Activated CD8-positive, alpha-beta T cell treated with anti-CD3 and anti-CD28 coated beads, Interleukin-2, amount 10 ng/mL, durations not matched to agents 7 days and 5 days (primary cell): ENCODE measurements at regions of chr5 and their contacts with region 1.

Region 1: DNA sequence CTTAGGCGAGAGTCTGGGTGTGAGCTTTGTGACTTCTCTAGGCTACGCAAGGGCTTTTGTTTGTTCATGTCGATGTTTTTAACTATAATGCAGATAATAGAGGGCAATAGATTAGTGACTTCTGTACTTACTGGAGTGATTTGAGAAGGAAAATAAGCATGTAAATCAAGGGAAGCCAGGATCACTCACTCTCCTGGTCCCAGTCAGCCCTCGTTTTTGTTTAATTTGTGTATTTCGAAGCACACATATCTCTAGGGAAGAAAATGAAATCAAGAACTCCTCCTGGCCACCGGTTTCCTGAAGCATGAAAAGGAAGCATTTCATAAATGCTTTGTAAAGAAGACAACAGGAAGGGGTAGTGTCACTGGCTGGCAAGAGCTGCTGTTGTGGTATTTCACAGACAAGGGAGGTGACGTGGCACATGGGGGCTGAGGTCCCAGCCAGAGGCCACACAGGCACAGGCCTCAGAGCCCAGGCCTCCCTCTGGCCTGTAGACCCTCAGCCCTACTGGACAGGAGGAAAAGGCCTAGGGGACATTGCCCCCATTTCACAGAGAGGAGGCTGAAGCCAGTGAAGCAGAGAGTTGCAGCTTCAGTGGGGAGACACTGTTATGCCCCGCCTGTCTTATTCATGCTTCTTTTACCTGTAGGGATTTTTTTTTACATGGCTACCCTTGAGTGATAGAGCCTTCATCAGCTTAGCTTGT is 34.1 kb downstream of the IRF1 start:
- DNase-seq: peak; percentile 77
- ATAC-seq: peak; percentile 69
- H3K4me3 Mint-ChIP-seq: peak overlapping the region; percentile 63
- H3K27ac Mint-ChIP-seq: peak overlapping the region; percentile 99
- H3K4me1 Mint-ChIP-seq: peaks cover 91% of the 10 kb centered on the region
- H3K27me3 Mint-ChIP-seq: no peaks in the 10 kb centered on the region

Region 2: GRCh38 chr5:132386644-132387286 is 69.7 kb before region 1 on chr5:
- CTCF ChIA-PET with region 1: interaction called, 17 read pairs
- POLR2A ChIA-PET with region 1: no interaction called
- DNase-seq: peak; percentile 87
- ATAC-seq: peak; percentile 93
- H3K4me3 Mint-ChIP-seq: no peak overlapping the region
- H3K27ac Mint-ChIP-seq: peak overlapping the region; percentile 51
- H3K4me1 Mint-ChIP-seq: peaks cover 57% of the 10 kb centered on the region
- H3K27me3 Mint-ChIP-seq: no peaks in the 10 kb centered on the region

Region 3: DNA sequence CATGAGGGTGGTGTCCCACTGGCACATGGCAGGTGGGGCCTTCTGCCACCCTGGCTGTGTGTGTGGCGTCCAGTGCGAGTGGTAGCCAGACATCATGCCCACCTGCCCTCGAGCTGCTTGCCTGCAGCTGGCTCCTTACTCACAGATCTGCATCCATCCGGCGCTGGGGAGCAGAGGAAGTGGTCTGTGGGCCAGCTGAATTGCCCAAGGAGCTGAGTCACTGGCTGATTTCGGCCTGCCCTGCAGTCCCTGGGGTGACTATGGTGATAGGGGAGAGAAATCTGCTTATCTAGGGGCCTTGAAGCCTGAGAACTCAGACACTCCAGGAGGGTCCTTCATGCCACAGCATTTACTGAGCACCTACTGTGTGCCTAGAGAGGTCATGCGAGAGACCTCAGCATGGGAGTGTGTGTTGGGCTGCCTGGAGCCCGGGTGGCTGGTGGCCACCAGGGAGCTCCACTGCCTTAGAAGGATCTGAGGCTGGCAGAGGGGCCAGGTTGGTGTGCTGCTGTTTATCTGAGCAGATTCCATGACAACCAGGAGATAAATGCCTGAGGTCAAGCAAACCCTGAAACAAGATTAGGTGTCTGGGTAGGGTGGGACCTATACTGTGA is 29.8 kb before region 1 on chr5:
- CTCF ChIA-PET with region 1: interaction called, 141 read pairs
- POLR2A ChIA-PET with region 1: interaction called, 137 read pairs
- DNase-seq: peak; percentile 85
- ATAC-seq: peak; percentile 59
- H3K4me3 Mint-ChIP-seq: peak overlapping the region; percentile 74
- H3K27ac Mint-ChIP-seq: peak overlapping the region; percentile 98
- H3K4me1 Mint-ChIP-seq: peaks cover 99% of the 10 kb centered on the region
- H3K27me3 Mint-ChIP-seq: no peaks in the 10 kb centered on the region

Region 4: GRCh38 chr5:132466433-132467286 is 10.2 kb after region 1 on chr5:
- CTCF ChIA-PET with region 1: interaction called, 114 read pairs
- POLR2A ChIA-PET with region 1: interaction called, 79 read pairs
- DNase-seq: peak; percentile 90
- ATAC-seq: peak; percentile 82
- H3K4me3 Mint-ChIP-seq: peak overlapping the region; percentile 60
- H3K27ac Mint-ChIP-seq: peak overlapping the region; percentile 92
- H3K4me1 Mint-ChIP-seq: peaks cover 100% of the 10 kb centered on the region
- H3K27me3 Mint-ChIP-seq: no peaks in the 10 kb centered on the region

Region 5: GRCh38 chr5:132479111-132479951 is 22.9 kb after region 1 on chr5:
- CTCF ChIA-PET with region 1: interaction called, 18 read pairs
- POLR2A ChIA-PET with region 1: interaction called, 175 read pairs
- DNase-seq: no peak
- ATAC-seq: no peak
- H3K4me3 Mint-ChIP-seq: no peak overlapping the region
- H3K27ac Mint-ChIP-seq: peak overlapping the region; percentile 80
- H3K4me1 Mint-ChIP-seq: peaks cover 83% of the 10 kb centered on the region
- H3K27me3 Mint-ChIP-seq: no peaks in the 10 kb centered on the region

Region 6: GRCh38 chr5:132495667-132496190 is 39.3 kb after region 1 on chr5:
- CTCF ChIA-PET with region 1: interaction called, 22 read pairs
- POLR2A ChIA-PET with region 1: interaction called, 175 read pairs
- DNase-seq: peak; percentile 87
- ATAC-seq: peak; percentile 59
- H3K4me3 Mint-ChIP-seq: peak overlapping the region; percentile 83
- H3K27ac Mint-ChIP-seq: peak overlapping the region; percentile 95
- H3K4me1 Mint-ChIP-seq: peaks cover 77% of the 10 kb centered on the region
- H3K27me3 Mint-ChIP-seq: no peaks in the 10 kb centered on the region